GM10248 (cell line): ENCODE measurements at regions of chr14 and their contacts with region 1.

Region 1: DNA sequence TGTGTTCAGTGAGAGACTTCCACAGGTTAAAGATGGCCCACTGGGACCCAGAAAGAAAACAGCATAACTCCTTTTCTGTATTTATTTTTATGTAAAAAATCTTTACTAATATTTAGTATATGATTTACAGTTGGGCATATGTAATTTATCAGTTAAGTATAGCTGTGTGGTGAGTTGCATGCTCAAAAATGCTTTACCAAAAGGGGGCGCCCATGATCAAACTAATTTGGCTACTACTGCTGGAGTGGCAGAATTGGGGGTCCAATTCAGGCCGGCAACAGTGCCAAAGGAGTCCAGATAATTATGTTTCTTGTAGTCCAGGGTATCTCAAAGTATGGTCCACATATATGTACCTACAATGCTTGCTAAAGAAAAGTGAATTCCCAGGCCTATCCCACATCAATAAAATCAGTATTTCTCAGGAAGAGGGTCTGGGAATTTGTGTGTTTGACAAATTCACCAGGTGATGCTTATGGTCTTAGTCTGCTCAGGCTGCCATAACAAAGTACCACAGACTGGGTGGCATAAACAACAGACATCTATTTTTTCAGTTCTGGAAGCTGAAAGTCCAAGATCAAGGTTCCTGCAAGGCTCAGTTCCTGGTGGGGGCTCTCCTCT is 152.0 kb downstream of the KTN1 start:
- DNase-seq: no peak
- CTCF ChIP-seq: peak; percentile 56

Region 2: GRCh38 chr14:55546212-55546874 is 185.6 kb before region 1 on chr14:
- CTCF ChIA-PET with region 1: no interaction called
- POLR2A ChIA-PET with region 1: no interaction called
- DNase-seq: peak; percentile 21
- CTCF ChIP-seq: no peak

Region 3: DNA sequence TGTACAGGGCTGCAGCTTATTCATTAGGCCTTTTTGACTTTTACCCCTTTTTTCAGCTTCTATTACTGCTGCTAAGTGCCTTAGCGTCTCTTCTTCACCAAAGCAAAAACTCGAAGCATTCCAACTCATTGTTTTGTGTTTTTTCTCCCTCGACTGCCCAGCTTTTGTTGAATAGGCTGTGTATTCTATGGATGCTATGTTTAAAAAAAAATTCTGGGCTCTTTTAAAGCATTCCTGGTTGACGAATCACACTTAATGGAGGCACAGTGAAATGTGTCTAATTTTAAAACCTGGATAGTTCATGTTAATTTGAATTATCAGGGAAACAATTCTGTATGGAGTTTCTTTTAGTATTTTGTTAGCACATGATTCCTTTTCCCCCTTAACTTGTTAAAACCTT is 122.3 kb before region 1 on chr14:
- CTCF ChIA-PET with region 1: no interaction called
- POLR2A ChIA-PET with region 1: no interaction called
- DNase-seq: no peak
- CTCF ChIP-seq: no peak

Region 4: DNA sequence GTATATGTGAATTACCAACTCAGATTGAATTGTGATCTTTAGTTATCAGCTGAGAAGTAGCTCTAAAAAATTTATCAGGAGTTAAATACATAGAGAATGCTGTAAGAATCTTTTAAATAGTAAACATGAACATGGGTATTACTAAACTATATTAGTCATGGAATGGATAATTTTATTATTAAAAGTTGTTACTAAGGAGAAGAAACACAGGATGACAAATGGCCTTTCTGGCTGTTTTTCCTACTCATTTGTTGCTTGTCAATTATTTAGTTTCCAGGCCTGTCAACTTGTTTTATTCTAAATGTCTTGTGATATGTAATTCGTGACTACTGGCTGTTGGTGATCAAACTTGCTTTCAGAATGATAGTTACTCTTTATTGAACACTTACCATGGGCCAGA is 93.3 kb before region 1 on chr14:
- CTCF ChIA-PET with region 1: no interaction called
- POLR2A ChIA-PET with region 1: no interaction called
- DNase-seq: no peak
- CTCF ChIP-seq: no peak

Region 5: DNA sequence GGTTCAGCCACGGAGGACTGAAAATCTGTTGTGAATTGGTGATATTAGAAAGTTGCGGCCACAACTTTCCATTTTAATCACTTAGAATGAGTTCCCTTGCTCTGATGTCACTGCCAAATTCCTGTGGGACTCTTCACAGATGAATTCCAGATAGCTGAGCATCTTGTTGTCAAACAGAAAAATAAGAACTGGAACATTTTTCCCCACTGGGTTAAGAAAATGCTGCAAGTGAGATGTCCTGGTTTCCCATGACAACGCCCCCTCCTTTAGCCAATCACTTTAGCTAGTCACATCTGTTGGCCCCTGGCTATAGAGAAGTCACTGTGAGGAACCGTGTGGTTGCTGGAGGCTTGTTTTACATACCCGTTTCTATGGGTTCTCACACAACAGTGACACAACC is 16.1 kb before region 1 on chr14:
- CTCF ChIA-PET with region 1: interaction called, 10 read pairs
- POLR2A ChIA-PET with region 1: no interaction called
- DNase-seq: no peak
- CTCF ChIP-seq: no peak

Region 6: DNA sequence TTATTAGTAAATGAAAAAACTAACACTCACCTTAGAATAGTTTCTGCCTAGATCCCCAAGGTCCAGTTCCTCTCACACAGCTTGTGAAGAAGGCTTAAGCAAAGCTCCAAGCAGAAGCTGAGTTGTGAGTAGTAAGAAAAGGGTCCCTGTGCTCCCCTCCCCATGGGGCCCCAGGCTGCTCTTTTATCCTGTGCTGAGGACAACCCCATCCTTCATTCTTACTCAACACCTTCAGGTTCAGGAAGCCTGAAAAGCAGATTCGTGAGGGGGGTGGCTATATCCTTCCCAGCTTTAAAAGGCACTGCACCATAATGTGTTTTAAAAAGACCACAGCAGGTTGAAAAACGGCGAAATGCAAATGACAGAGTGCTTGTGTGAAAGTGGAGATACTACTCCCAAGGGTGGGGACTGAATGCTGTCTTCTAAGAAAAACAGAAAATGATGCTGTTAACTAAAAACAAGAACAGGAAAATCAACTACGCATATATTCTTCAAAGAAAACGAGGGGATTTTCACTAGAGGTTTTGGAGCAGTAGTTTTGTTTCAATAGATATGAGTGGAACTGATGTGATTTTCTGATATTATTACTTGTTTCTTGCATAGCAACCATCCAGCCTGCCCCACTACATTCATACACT is 30.7 kb after region 1 on chr14:
- CTCF ChIA-PET with region 1: interaction called, 16 read pairs
- POLR2A ChIA-PET with region 1: no interaction called
- DNase-seq: peak; percentile 29
- CTCF ChIP-seq: no peak

Region 7: DNA sequence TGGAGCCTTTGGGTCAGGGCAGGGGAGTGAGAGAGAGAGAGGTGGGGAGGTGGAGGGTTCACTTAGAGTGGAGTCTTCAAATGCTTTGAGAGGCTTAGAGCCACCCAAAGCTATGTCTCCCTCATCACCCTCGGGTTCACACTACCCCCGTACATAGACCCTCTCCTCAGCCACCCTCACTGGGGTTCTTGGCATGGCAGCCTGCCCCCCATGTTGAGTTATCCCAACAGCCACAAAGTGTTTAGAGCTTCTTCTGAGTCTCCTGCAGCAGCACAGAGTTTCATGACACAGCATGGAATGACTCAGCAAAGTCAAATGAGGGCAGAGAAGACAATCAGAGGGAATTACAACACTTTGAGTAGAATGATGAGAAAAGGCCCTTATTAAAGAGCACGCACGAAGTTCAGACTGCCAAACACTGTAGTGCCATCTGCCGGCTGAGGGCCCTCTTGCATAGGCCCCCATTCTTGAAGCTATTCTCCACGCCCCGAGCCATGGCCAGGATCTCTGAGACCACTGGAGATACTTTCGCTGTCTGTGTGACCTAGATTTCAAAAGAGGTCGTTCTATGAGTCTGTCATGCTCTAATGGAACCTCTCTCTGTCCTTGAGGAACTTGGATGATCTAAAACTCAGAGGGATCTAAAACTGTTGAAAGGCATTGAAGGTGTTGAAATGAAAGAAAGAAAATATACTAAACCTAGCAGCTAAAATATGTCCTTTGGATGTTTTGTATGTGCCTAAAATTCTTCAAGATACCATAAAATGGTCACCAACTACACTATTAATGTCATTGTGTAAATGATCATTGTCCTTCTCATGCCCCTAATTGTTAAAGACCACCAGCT is 608.1 kb after region 1 on chr14:
- CTCF ChIA-PET with region 1: interaction called, 27 read pairs
- POLR2A ChIA-PET with region 1: no interaction called
- DNase-seq: peak; percentile 58
- CTCF ChIP-seq: peak; percentile 64

Region 8: GRCh38 chr14:56422703-56423213 is 690.8 kb after region 1 on chr14:
- CTCF ChIA-PET with region 1: interaction called, 14 read pairs
- POLR2A ChIA-PET with region 1: no interaction called
- DNase-seq: peak; percentile 31
- CTCF ChIP-seq: peak; percentile 60